PC-3 (cell line): ENCODE measurements at regions of chr17 and their contacts with region 1.

Region 1: GRCh38 chr17:75364078-75364477 is 41.4 kb downstream of the GRB2 start:
- DNase-seq: peak; percentile 94
- ATAC-seq: peak; percentile 89
- H3K4me3 ChIP-seq: peak overlapping the region; percentile 8; the same call in 1 of the 2 replicates
- H3K27ac ChIP-seq: peak overlapping the region; percentile 45
- H3K4me1 ChIP-seq: peaks cover 73% of the 10 kb centered on the region
- H3K27me3 ChIP-seq: no peaks in the 10 kb centered on the region
- CTCF ChIP-seq: no peak

Region 2: GRCh38 chr17:75096082-75096625 is 267.9 kb before region 1 on chr17:
- CTCF ChIA-PET with region 1: no interaction called
- POLR2A ChIA-PET with region 1: interaction called, 14 read pairs
- intact Hi-C with region 1: no loop called
- DNase-seq: peak; percentile 99
- ATAC-seq: peak; percentile 99
- H3K4me3 ChIP-seq: no peak overlapping the region
- H3K27ac ChIP-seq: peak overlapping the region; percentile 87
- H3K4me1 ChIP-seq: peaks cover 33% of the 10 kb centered on the region
- H3K27me3 ChIP-seq: no peaks in the 10 kb centered on the region
- CTCF ChIP-seq: no peak

Region 3: DNA sequence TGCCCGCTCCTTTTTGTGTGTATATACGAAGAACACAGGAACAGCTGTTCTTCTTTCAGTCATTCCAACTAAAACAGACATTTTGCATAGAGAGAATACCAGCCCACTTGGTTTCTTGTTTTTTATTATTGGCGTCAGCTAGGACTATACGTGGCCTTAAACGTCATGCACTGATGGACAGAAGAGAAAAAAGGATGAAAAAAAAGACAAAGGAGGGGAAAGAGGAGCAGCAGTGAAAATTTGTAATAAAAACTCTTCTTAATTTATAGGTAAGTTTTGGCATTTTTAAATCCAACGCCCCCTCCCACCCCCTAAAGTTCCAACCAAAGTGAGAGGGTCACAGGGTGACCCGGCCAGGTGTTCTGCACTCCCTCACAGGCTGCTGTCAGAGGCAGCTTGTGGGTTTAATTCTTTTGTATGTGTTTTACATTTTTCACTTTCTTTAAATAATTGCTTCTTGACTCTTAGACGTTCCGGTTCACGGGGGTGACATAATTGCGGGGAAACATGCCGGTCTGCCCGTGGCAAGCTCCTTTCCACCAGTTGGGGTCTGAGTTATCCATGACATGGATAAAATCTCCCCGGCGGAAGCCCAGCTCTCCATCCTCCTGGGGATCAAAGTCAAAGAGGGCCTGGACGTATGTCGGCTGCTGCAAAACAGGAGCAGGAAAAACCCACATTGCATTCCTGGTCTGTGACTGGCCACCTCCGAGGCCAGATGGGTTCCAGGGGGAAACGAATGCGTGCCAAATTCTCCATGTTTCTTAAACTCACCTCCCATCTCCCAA is 44.0 kb before region 1 on chr17:
- CTCF ChIA-PET with region 1: interaction called, 12 read pairs
- POLR2A ChIA-PET with region 1: no interaction called
- intact Hi-C with region 1: loop called (anchors 2 kb)
- DNase-seq: no peak
- ATAC-seq: no peak
- H3K4me3 ChIP-seq: no peak overlapping the region
- H3K27ac ChIP-seq: no peak overlapping the region
- H3K4me1 ChIP-seq: no peaks in the 10 kb centered on the region
- H3K27me3 ChIP-seq: no peaks in the 10 kb centered on the region
- CTCF ChIP-seq: no peak

Region 4: GRCh38 chr17:75380315-75380714 is 16.2 kb after region 1 on chr17:
- CTCF ChIA-PET with region 1: interaction called, 3 read pairs
- POLR2A ChIA-PET with region 1: interaction called, 10 read pairs
- intact Hi-C with region 1: loop called (anchors 2 kb)
- DNase-seq: no peak
- ATAC-seq: peak; percentile 29; the same call in 1 of the 2 replicates
- H3K4me3 ChIP-seq: no peak overlapping the region
- H3K27ac ChIP-seq: no peak overlapping the region
- H3K4me1 ChIP-seq: no peaks in the 10 kb centered on the region
- H3K27me3 ChIP-seq: no peaks in the 10 kb centered on the region
- CTCF ChIP-seq: no peak